ENCODE measurements at regions of chr16 and their contacts with region 1.

Region 1: DNA sequence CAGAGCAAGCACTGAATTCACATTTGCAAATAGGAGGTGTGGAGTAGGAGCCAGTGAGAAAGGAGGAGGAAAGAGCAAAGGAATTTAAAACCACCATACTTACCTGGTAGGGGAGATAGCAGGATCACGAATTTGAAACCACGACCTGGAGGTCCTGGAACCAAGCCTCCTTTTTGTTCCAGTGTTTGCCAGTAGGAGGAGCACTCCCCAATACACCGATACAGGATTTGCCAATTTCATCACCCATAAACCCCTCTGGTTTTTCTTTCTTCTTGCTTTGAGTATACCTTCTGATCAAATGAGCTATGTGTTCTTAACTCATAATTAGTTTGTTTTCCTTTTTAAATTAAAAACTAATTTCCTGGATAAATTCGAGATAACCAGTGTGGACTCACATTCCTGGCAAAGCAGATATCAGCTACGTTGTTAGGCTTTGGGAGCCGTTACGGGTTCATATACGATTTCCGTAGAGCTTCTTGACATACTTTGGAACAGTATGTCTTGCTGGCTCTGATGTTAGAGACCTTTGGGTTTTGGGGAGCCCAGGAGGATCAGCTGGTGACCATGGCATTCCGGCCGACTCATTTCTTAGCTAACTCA is 22.7 kb downstream of the BCO1 start:
- DNase-seq: no peak
- H3K4me3 ChIP-seq: no peak overlapping the region
- CTCF ChIP-seq: peak; percentile 43

Region 2: GRCh38 chr16:81238296-81239011 is 22.7 kb before region 1 on chr16 and contains the start of gene BCO1:
- CTCF ChIA-PET with region 1: interaction called, 10 read pairs
- POLR2A ChIA-PET with region 1: no interaction called
- DNase-seq: peak; percentile 9
- H3K4me3 ChIP-seq: peak within 1 kb of the TSS; percentile 47
- CTCF ChIP-seq: no peak

Region 3: DNA sequence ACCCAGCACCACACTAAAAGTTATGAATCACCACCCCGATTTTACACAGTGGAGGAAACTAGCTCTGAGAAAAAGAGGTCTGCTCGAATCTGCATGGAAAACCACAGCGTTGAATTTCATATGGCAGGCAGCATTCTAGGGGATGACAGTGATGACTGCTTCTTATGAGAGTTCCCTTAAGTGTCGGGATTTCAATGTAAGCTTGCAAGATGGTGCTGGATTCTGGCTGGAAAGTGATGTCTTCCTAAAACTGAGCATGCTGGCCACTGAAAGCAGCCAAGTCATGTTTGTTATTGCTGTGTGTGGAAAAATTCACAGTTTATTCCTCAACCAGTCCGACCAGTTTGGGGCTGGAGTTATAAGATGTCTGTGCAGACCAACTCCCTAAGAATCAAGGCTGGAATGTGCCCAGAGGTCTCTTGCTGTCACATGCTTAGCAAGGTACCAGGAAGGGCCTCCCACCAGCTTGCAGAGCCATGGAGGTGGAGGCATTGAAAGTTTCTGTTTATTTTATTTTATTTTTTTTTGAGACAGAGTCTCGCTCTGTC is 16.5 kb after region 1 on chr16:
- CTCF ChIA-PET with region 1: interaction called, 10 read pairs
- POLR2A ChIA-PET with region 1: no interaction called
- DNase-seq: no peak
- H3K4me3 ChIP-seq: no peak overlapping the region
- CTCF ChIP-seq: no peak

Measured in AG04449 (cell line).